ENCODE measurements at regions of chr9 and their contacts with region 1.

Region 1: DNA sequence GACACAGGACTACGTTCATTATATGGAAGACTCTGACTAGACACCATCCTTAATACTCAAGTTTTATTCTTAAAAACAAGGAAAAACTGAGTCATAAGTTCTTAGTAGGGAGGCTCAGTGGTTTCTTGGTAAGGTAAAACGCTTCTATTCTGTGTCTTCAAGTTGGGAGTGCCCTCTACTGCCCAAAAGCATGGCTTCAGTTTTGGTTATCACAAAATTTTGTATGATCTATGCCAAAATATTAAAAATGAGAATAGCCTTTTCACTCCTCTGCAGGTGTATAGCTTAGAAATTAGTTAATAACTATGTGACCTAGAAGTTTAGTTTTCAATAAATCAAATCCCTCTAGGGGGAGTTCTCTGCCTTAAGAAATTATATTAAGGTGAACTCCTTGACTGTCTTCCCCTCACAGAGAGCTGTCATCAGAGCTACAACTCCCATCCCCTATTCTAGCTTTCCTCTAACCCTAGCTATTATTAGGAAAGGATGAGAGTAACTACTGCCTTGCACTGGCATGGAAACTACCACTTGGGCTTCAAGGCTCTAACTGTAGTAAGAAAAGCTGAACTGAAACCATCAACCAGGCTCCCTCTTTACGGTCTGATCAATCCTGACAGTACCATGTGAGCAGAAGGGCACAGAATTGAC is 189.7 kb downstream of the GNAQ start:
- DNase-seq: no peak
- H3K4me3 Mint-ChIP-seq: no peak overlapping the region
- H3K27ac Mint-ChIP-seq: no peak overlapping the region
- H3K4me1 Mint-ChIP-seq: peaks cover 13% of the 10 kb centered on the region
- H3K27me3 Mint-ChIP-seq: no peaks in the 10 kb centered on the region

Region 2: GRCh38 chr9:77743386-77743785 is 98.5 kb before region 1 on chr9:
- CTCF ChIA-PET with region 1: no interaction called
- DNase-seq: no peak
- H3K4me3 Mint-ChIP-seq: no peak overlapping the region
- H3K27ac Mint-ChIP-seq: no peak overlapping the region
- H3K4me1 Mint-ChIP-seq: peaks cover 24% of the 10 kb centered on the region
- H3K27me3 Mint-ChIP-seq: no peaks in the 10 kb centered on the region

Region 3: DNA sequence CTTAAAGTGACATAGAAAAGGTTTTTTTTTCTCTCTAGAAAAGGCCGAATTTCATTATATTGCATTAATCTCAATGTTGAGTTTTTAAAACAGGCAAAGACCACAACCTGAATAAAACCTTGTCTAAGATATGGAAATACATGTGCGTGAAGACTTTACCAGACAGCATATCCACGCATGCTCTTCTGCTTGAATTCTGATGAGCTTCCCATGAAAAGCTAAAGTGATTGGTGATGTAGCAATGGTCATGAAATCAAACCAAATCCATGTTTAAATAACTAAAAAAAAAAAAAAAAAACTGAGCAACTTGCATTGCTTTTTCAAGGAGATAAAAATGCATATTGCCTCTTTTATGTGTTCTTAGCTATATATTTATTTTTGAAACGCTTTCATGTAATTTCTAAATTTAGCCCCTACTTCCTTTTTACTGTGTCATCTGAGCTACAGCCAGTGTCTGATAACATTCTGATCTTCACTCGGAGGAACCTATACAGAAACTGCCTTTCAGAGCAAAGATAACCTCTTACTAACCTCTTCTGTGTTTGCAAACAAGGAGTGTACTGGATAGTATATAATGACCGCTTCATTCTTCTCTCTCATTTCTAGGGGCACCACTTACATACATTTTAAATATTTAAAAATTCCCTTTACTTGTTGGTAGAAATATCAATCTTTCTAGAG is 14.6 kb before region 1 on chr9:
- CTCF ChIA-PET with region 1: interaction called, 11 read pairs
- DNase-seq: no peak
- H3K4me3 Mint-ChIP-seq: peak overlapping the region; percentile 53
- H3K27ac Mint-ChIP-seq: peak overlapping the region; percentile 81
- H3K4me1 Mint-ChIP-seq: peaks cover 23% of the 10 kb centered on the region
- H3K27me3 Mint-ChIP-seq: no peaks in the 10 kb centered on the region

Region 4: GRCh38 chr9:77977210-77977611 is 135.3 kb after region 1 on chr9:
- CTCF ChIA-PET with region 1: interaction called, 20 read pairs
- DNase-seq: peak; percentile 75
- H3K4me3 Mint-ChIP-seq: no peak overlapping the region
- H3K27ac Mint-ChIP-seq: peak overlapping the region; percentile 26
- H3K4me1 Mint-ChIP-seq: peaks cover 54% of the 10 kb centered on the region
- H3K27me3 Mint-ChIP-seq: no peaks in the 10 kb centered on the region

Region 5: DNA sequence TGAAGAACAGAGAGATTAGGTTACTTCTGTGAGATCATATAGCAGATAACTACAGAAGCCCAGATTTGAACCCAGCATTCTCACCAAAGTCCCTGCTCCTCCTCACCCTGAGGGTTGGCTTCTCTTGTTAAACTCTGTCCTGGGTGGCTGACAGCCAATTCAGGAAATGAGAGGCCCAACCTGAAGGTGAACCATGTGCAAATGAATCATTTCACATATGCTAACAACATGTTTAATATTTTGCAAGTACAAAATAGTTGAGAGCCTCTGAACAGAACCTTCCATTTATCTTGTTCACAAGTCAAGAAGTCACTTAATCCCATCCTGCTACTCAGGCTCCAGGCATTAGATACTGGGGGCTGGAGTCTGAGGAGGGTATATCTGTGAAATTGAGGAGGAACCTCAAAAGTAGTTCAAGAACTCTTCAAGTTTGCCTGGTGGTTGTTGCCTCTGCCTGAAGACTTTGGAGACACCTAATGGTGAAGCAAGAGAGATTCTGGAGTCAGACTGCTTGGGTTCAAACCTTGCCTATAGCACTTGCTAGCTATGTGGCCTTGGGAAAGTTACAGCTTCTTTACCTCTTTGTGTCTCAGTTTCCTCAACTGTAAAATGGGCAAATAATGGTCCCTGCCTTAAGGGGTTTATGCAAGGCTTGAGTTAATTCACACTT is 1019.1 kb after region 1 on chr9:
- CTCF ChIA-PET with region 1: no interaction called
- DNase-seq: no peak
- H3K4me3 Mint-ChIP-seq: no peak overlapping the region
- H3K27ac Mint-ChIP-seq: no peak overlapping the region
- H3K4me1 Mint-ChIP-seq: no peaks in the 10 kb centered on the region
- H3K27me3 Mint-ChIP-seq: no peaks in the 10 kb centered on the region

Measured in activated naive CD4-positive, alpha-beta T cell treated with anti-CD3 and anti-CD28 coated beads, Interleukin-2, amount 10 ng/mL, durations not matched to agents 7 days and 5 days (primary cell).